RWPE1 (cell line): ENCODE measurements at regions of chr18 and their contacts with region 1.

Region 1: GRCh38 chr18:24488824-24489493 is 28.5 kb downstream of the HRH4 start:
- DNase-seq: peak; percentile 27
- H3K27ac ChIP-seq: no peak overlapping the region
- CTCF ChIP-seq: peak; percentile 85

Region 2: DNA sequence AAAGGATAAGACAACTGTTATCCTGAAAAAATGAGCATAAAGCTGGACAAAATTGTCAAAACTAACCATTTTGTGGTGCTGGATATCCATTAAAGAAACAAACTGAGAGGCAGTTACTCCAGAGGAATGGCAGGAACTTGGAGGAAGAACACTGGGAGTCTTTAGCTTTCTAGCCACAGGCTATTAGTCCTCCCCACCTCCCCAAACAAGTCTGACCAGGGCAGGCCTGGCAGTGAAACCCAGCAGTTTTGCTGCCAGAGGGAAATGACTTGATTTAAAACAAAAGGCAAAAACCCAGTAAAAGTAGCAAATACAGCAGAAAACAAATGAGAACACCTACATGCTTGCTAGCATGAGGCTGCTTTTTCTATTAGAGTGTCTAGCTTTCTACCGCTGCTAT is 126.2 kb before region 1 on chr18:
- CTCF ChIA-PET with region 1: interaction called, 12 read pairs
- POLR2A ChIA-PET with region 1: interaction called, 5 read pairs
- DNase-seq: peak; percentile 30
- H3K27ac ChIP-seq: no peak overlapping the region
- CTCF ChIP-seq: no peak

Region 3: DNA sequence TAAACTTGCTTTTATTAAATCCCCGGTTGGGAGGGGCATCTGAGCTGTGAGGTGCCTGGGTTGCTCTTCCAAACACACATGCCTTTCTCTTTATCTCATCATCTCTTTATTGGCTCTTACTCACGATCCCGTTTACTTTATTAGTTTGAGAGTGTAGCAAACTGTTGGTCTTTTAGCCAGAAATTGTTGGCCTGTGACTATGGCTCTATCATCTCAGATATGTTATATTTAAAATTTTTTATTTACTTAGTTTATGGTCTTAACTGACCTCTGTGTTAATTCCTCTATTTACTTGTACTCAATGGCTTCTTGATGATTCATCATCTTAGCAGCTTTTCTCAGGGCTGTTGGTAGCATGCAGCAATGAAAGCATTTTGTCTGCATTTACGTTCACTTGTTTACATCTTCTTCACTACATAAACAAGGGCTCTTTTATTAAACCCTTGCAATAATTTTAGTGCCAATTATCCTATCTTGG is 379.8 kb after region 1 on chr18:
- CTCF ChIA-PET with region 1: no interaction called
- POLR2A ChIA-PET with region 1: no interaction called
- DNase-seq: no peak
- H3K27ac ChIP-seq: no peak overlapping the region
- CTCF ChIP-seq: no peak

Region 4: GRCh38 chr18:25019086-25019860 is 530.3 kb after region 1 on chr18:
- CTCF ChIA-PET with region 1: no interaction called
- POLR2A ChIA-PET with region 1: no interaction called
- DNase-seq: no peak
- H3K27ac ChIP-seq: no peak overlapping the region
- CTCF ChIP-seq: no peak